ENCODE measurements at regions of chr3 and their contacts with region 1.

Region 1: GRCh38 chr3:141231101-141231935 is at the start of gene PXYLP1:
- DNase-seq: peak; percentile 91
- ATAC-seq: peak; percentile 96
- H3K4me3 Mint-ChIP-seq: peak within 1 kb of the TSS; percentile 93
- H3K27ac Mint-ChIP-seq: peak within 1 kb of the TSS; percentile 94
- H3K4me1 Mint-ChIP-seq: peaks cover 16% of the 10 kb centered on the region
- H3K27me3 Mint-ChIP-seq: no peaks in the 10 kb centered on the region
- CTCF ChIP-seq: no peak
- total RNA-seq, gene PXYLP1: 2.3 and 2.7 TPM in 2 replicates

Region 2: DNA sequence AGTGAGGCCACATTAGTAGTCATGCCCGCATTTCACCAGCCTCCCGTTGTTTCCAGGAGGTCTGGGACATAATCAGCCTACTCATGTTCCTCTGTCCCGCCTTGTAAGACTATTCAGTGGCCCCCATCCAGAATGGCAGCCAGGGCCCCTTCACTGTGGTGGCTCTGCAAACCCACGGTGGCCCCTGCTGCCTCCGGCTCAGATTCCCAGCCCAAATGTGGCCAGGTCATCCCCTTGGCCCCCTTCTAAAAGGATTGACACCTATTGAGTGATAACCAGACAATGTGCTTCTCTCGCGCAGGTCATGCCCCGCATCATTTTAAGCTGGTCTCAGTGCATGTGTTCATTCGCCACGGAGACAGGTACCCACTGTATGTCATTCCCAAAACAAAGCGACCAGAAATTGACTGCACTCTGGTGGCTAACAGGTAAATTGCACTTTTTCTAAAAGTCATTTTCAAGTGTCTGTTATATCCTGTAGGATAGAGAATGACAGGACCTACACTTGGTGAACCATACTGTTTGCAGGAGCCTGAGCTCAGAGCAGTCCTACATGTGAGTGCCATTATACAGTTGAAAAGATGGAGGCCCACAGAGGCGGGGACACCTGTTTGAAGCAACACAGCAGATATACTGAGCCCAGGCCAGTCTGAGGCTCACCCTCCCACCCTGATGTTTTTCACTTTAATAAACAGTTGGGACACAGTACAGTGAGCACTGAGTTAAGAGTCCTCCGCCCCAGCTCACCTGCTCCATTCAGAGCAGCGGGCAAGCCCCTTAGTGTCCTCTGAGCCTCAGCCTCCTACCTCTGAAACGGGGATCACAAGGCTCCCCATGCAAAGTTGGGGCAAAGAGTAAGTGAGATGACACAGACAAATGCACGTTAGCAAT is 48.0 kb after region 1 on chr3:
- CTCF ChIA-PET with region 1: interaction called, 7 read pairs
- POLR2A ChIA-PET with region 1: interaction called, 4 read pairs
- intact Hi-C with region 1: loop called (anchors 1 kb)
- DNase-seq: no peak
- ATAC-seq: no peak
- H3K4me3 Mint-ChIP-seq: no peak overlapping the region
- H3K27ac Mint-ChIP-seq: no peak overlapping the region
- H3K4me1 Mint-ChIP-seq: no peaks in the 10 kb centered on the region
- H3K27me3 Mint-ChIP-seq: no peaks in the 10 kb centered on the region
- CTCF ChIP-seq: no peak